Activated naive CD4-positive, alpha-beta T cell treated with anti-CD3 and anti-CD28 coated beads for 36 hours (primary cell): ENCODE measurements at regions of chrX and their contacts with region 1.

Region 1: GRCh38 chrX:49922291-49923241 is at the start of gene CLCN5:
- DNase-seq: peak; percentile 95
- H3K4me3 Mint-ChIP-seq: peak within 1 kb of the TSS; percentile 73
- H3K27ac Mint-ChIP-seq: peak within 1 kb of the TSS; percentile 76
- H3K4me1 Mint-ChIP-seq: peaks cover 7% of the 10 kb centered on the region
- H3K27me3 Mint-ChIP-seq: no peaks in the 10 kb centered on the region
- total RNA-seq, gene CLCN5: 2.6 to 3.6 TPM

Region 2: DNA sequence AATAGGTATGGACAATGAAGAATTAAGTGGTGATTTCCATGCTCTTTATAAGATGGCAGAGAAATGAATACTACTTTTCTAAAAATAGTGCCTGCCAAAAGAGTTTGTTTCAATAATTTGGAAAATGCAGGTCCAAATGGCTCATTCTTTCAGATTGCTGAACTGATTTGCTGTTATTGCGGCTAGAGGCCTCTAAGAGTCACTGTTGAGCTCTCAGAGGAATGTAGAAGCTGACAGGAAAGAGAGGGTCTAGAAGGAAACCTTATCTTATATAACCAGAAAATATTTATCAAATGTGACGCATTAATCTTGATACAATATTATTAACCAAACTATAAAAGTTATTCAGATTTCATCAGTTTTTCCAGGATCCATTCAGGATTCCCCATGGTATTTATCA is 161.1 kb before region 1 on chrX:
- CTCF ChIA-PET with region 1: no interaction called
- intact Hi-C with region 1: loop called (anchors 2 kb)
- DNase-seq: peak; percentile 10
- H3K4me3 Mint-ChIP-seq: no peak overlapping the region
- H3K27ac Mint-ChIP-seq: no peak overlapping the region
- H3K4me1 Mint-ChIP-seq: no peaks in the 10 kb centered on the region
- H3K27me3 Mint-ChIP-seq: no peaks in the 10 kb centered on the region

Region 3: DNA sequence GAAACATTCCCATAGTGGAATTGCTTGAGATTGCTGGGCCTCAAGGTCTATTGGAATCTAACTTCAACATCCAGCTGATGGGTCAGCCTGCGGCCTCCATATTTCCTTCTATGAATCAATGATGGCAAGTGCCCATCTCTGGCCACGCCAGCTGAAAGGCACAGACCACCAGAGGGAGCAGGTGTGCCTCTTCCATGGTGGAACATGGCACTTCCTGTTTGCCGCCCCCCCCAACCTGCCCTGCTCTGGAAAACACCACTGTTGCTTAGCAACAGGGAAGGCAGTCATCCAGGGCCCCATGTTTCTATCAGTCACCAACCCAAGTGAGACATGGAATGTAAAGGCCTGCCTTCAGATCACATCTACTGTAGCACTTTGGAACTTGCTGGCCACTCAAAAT is 81.9 kb before region 1 on chrX:
- CTCF ChIA-PET with region 1: interaction called, 8 read pairs
- intact Hi-C with region 1: loop called (anchors 1 kb)
- DNase-seq: peak; percentile 79
- H3K4me3 Mint-ChIP-seq: no peak overlapping the region
- H3K27ac Mint-ChIP-seq: no peak overlapping the region
- H3K4me1 Mint-ChIP-seq: peaks cover 2% of the 10 kb centered on the region
- H3K27me3 Mint-ChIP-seq: no peaks in the 10 kb centered on the region

Region 4: DNA sequence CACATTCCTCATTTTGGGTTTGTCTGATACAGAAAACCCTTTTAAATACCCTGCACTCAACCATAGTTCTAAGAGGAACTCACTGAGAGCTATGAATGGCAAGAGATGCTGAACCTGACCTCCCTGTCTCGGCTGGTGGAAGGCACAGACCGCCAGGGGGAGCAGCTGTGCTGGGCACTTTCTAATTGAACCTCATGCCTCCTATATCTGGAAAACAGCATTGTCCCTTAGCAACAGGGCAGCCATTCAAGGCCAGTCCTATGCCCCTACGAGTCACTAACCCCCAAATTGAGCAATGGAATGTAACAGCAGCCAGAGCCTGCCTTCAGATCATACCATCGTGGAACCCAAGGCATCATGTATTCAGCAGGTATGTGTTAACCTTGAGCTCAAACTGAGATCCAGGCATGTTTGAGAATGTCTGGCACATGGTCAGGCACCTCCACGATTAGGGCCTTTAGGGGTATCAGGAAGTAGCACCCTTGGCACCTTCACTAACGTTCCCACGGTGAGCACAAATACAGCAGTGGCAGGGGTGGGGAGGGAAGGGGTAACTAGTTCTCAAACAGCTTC is 38.2 kb before region 1 on chrX:
- CTCF ChIA-PET with region 1: interaction called, 23 read pairs
- intact Hi-C with region 1: loop called (anchors 1 kb)
- DNase-seq: peak; percentile 73
- H3K4me3 Mint-ChIP-seq: no peak overlapping the region
- H3K27ac Mint-ChIP-seq: no peak overlapping the region
- H3K4me1 Mint-ChIP-seq: peaks cover 21% of the 10 kb centered on the region
- H3K27me3 Mint-ChIP-seq: no peaks in the 10 kb centered on the region

Region 5: GRCh38 chrX:50204364-50204899 is 281.9 kb after region 1 on chrX and contains the start of gene CCNB3:
- CTCF ChIA-PET with region 1: no interaction called
- intact Hi-C with region 1: loop called (anchors 1 kb)
- DNase-seq: peak; percentile 74
- H3K4me3 Mint-ChIP-seq: peak within 1 kb of the TSS; percentile 71
- H3K27ac Mint-ChIP-seq: peak within 1 kb of the TSS; percentile 79
- H3K4me1 Mint-ChIP-seq: peaks cover 11% of the 10 kb centered on the region
- H3K27me3 Mint-ChIP-seq: no peaks in the 10 kb centered on the region
- total RNA-seq, gene CCNB3: 0.37 to 0.79 TPM